ENCODE measurements at regions of chr6 and their contacts with region 1.

Region 1: GRCh38 chr6:159062564-159062945 is 17.8 kb upstream of the TAGAP start:
- DNase-seq: peak; percentile 87
- ATAC-seq: peak; percentile 90
- H3K4me3 Mint-ChIP-seq: peak overlapping the region; percentile 55
- H3K27ac Mint-ChIP-seq: peak overlapping the region; percentile 95
- H3K4me1 Mint-ChIP-seq: peaks cover 86% of the 10 kb centered on the region
- H3K27me3 Mint-ChIP-seq: no peaks in the 10 kb centered on the region

Region 2: GRCh38 chr6:158835616-158836221 is 226.8 kb before region 1 on chr6:
- CTCF ChIA-PET with region 1: no interaction called
- POLR2A ChIA-PET with region 1: no interaction called
- DNase-seq: no peak
- ATAC-seq: no peak
- H3K4me3 Mint-ChIP-seq: no peak overlapping the region
- H3K27ac Mint-ChIP-seq: no peak overlapping the region
- H3K4me1 Mint-ChIP-seq: peaks cover 6% of the 10 kb centered on the region
- H3K27me3 Mint-ChIP-seq: peaks cover 9% of the 10 kb centered on the region

Region 3: GRCh38 chr6:158892266-158892665 is 170.3 kb before region 1 on chr6:
- CTCF ChIA-PET with region 1: no interaction called
- POLR2A ChIA-PET with region 1: no interaction called
- DNase-seq: no peak
- ATAC-seq: no peak
- H3K4me3 Mint-ChIP-seq: no peak overlapping the region
- H3K27ac Mint-ChIP-seq: no peak overlapping the region
- H3K4me1 Mint-ChIP-seq: no peaks in the 10 kb centered on the region
- H3K27me3 Mint-ChIP-seq: no peaks in the 10 kb centered on the region

Region 4: DNA sequence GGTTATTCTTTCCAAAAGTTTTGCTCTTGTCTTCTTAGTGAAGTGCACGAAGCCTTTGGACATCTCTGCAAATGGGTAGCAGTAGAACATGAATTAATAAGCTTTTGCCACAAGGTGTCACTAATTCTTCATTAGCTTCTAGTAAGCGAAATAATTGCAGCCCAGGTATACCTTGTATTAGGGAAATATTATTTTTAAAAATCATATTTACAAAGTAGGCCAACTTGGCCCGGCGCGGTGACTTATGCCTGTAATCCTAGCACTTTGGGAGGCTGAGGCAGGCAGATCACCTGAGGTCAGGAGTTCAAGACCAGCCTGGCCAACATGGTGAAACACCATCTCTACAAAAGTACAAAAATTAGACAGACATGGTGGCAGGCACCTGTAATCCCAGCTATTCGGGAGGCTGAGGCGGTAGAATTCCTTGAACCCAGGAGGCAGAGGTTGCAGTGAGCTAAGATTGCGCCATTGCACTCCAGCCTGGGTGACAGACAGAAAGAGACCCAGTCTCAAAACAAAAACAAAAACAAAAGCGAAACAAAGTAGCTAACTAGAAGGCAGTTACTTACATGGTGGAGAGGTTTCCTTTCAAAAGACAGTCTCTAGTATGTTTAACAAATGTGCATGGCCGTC is 53.8 kb before region 1 on chr6:
- CTCF ChIA-PET with region 1: interaction called, 12 read pairs
- POLR2A ChIA-PET with region 1: no interaction called
- DNase-seq: peak; percentile 20
- ATAC-seq: peak; percentile 68
- H3K4me3 Mint-ChIP-seq: peak overlapping the region; percentile 7
- H3K27ac Mint-ChIP-seq: peak overlapping the region; percentile 18
- H3K4me1 Mint-ChIP-seq: peaks cover 19% of the 10 kb centered on the region
- H3K27me3 Mint-ChIP-seq: no peaks in the 10 kb centered on the region

Region 5: DNA sequence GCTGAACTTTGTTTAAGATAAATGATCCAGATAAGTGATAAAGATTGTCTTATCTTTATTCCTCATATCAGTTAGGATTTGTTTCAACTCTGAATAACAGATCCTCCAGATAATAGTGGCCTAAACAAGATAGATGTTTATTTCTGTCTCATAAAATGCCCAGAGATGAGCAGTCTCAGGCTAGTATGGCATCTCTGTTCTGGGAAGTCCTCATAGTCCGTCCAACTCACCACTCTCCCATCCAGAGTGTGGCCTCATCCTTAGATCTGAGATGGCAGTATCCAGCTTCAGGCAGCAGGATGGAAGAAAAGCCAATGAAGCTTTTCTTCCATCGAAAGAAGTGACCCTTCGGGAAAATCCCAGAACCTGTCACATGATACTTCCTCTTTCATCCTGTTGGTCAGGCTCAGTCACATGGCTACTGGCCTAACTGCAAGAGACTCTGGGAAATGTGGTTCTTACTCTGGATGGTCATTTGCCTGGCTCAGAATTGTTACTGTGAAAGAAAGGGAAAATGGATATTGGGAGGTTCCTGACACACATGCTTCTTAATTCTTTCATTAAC is 11.6 kb after region 1 on chr6:
- CTCF ChIA-PET with region 1: interaction called, 37 read pairs
- POLR2A ChIA-PET with region 1: interaction called, 16 read pairs
- DNase-seq: peak; percentile 17
- ATAC-seq: no peak
- H3K4me3 Mint-ChIP-seq: no peak overlapping the region
- H3K27ac Mint-ChIP-seq: no peak overlapping the region
- H3K4me1 Mint-ChIP-seq: peaks cover 56% of the 10 kb centered on the region
- H3K27me3 Mint-ChIP-seq: no peaks in the 10 kb centered on the region

Region 6: DNA sequence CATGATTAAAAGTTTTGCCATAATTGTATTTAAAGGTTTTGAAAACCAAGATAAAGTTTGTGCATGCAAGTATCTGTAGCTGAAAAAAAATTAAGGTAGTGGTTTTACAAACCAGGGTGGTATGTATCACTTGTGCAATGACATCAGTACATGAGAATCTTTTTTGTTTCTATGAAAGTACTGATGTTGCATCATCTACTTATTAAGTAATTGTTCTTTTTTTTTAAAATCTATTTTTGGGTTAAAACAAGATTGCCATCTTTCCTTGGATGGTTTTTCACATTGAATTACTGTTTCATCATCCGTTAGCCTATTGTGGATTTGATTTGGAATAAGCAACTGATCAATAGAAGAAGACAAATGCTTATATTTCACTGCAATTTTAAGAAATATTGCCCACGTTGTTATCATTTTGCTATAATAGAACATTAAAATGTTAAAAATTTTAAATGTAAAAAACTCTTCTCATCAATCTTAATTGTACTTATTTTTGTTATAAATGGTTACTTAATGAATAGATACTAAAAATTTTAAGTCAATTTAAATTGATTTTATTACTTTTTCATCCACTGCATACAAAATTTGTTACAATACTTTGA is 22.0 kb after region 1 on chr6:
- CTCF ChIA-PET with region 1: interaction called, 6 read pairs
- POLR2A ChIA-PET with region 1: interaction called, 11 read pairs
- DNase-seq: no peak
- ATAC-seq: no peak
- H3K4me3 Mint-ChIP-seq: no peak overlapping the region
- H3K27ac Mint-ChIP-seq: no peak overlapping the region
- H3K4me1 Mint-ChIP-seq: peaks cover 25% of the 10 kb centered on the region
- H3K27me3 Mint-ChIP-seq: no peaks in the 10 kb centered on the region

Region 7: GRCh38 chr6:159098636-159099106 is 36.1 kb after region 1 on chr6:
- CTCF ChIA-PET with region 1: interaction called, 51 read pairs
- POLR2A ChIA-PET with region 1: interaction called, 62 read pairs
- DNase-seq: peak; percentile 71
- ATAC-seq: peak; percentile 57
- H3K4me3 Mint-ChIP-seq: peak overlapping the region; percentile 58
- H3K27ac Mint-ChIP-seq: peak overlapping the region; percentile 90
- H3K4me1 Mint-ChIP-seq: peaks cover 76% of the 10 kb centered on the region
- H3K27me3 Mint-ChIP-seq: no peaks in the 10 kb centered on the region

Region 8: DNA sequence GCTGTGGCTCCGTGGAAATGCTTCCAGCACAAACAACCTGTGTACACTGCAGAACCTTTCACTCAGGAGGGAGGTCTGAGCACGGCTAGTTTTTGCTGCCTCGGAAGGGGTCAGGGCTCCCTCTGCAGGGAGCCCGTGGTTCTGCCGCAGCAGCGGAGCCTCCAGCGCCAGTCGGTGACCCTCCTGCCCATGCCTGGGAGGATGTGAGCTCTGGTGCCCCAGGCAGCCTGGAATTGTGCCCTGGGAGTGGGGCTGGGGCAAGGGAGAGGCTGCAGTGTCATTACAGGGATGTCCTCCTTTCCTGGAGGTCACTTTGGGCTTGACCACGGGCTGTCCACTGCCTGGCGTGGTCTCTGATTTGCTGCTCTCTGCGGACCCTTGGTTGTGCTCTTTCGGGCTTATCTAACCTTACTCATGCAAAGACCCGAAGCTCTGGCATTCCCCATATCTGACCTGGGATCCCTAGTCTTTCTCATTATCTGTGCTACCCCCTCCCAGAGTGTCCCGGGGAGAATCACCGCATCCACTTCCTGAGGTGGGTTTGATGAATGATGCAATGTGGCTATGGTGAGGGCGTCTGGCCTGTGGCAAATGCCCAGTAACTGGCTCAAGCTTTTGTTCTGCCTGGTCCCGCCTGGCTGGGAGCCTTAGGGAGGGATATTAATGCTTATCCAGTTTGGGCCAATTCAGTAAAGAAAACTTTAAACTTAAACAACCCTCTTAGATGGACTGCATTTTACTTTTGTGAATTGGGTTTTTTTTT is 41.8 kb after region 1 on chr6:
- CTCF ChIA-PET with region 1: interaction called, 51 read pairs
- POLR2A ChIA-PET with region 1: interaction called, 62 read pairs
- DNase-seq: peak; percentile 87
- ATAC-seq: peak; percentile 59
- H3K4me3 Mint-ChIP-seq: peak overlapping the region; percentile 44
- H3K27ac Mint-ChIP-seq: peak overlapping the region; percentile 93
- H3K4me1 Mint-ChIP-seq: peaks cover 84% of the 10 kb centered on the region
- H3K27me3 Mint-ChIP-seq: no peaks in the 10 kb centered on the region

Region 9: GRCh38 chr6:159110013-159110412 is 47.5 kb after region 1 on chr6:
- CTCF ChIA-PET with region 1: interaction called, 51 read pairs
- POLR2A ChIA-PET with region 1: interaction called, 36 read pairs
- DNase-seq: peak; percentile 60
- ATAC-seq: no peak
- H3K4me3 Mint-ChIP-seq: no peak overlapping the region
- H3K27ac Mint-ChIP-seq: no peak overlapping the region
- H3K4me1 Mint-ChIP-seq: peaks cover 59% of the 10 kb centered on the region
- H3K27me3 Mint-ChIP-seq: no peaks in the 10 kb centered on the region

Region 10: DNA sequence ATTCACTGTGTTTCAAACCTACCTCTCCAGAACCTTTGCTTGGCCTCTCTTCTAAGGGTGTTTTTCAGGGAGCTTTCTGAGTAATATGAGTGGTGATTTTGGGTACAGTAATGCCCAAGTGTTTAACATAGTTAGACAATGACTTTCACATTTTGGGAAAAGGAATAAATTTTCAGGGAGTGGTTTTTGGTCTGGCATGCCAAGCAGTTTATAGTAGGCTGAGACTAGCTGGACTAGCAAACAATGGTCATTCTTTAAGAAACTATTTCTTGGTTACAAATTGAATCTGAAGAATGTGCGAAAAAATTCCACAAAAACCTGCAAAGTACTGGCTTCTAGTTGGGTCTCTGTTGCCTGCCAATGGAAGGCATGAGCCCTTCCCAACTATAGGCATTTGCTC is 122.0 kb after region 1 on chr6:
- CTCF ChIA-PET with region 1: no interaction called
- POLR2A ChIA-PET with region 1: no interaction called
- DNase-seq: no peak
- ATAC-seq: no peak
- H3K4me3 Mint-ChIP-seq: no peak overlapping the region
- H3K27ac Mint-ChIP-seq: no peak overlapping the region
- H3K4me1 Mint-ChIP-seq: peaks cover 14% of the 10 kb centered on the region
- H3K27me3 Mint-ChIP-seq: peaks cover 14% of the 10 kb centered on the region

Measured in activated CD8-positive, alpha-beta T cell treated with anti-CD3 and anti-CD28 coated beads, Interleukin-2, amount 10 ng/mL, durations not matched to agents 7 days and 5 days (primary cell).